PC-9 (cell line): ENCODE measurements at regions of chr1 and their contacts with region 1.

Region 1: DNA sequence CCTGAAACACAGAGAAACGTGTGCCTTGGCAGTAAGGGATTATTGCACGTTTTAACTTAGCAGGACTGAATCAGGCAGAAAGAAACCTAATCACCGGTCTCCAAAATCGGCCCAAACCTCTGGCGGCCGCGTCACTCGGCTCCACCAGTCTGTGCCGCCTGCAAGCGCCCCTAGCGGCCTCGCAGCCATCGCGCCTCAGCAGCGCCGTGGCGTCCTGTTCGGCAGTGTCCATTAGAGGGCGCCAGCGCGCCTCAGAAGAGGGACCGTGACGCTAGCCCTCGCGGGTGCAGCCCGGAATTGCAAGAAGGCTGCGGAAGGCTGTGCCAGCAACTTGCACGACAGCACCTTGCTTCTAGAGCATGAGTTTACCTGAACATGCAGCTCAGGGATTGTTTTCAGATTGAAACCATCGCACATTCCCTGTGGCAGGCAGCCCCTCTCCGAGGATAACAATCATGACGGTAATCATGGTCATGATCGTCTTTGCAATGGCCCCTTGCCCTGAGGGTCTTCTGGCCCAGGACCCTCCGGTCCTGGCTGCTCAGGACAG is 164.4 kb downstream of the TRIM33 start:
- DNase-seq: peak; percentile 84 to 97
- H3K4me3 ChIP-seq: peak overlapping the region; percentile 57
- H3K27ac ChIP-seq: no peak overlapping the region
- H3K4me1 ChIP-seq: no peaks in the 10 kb centered on the region
- H3K27me3 ChIP-seq: no peaks in the 10 kb centered on the region
- CTCF ChIP-seq: peak; percentile 100

Region 2: GRCh38 chr1:113978863-113979702 is 367.5 kb before region 1 on chr1 and contains the start of gene OLFML3:
- CTCF ChIA-PET with region 1: interaction called, 3 read pairs
- POLR2A ChIA-PET with region 1: no interaction called
- intact Hi-C with region 1: loop called (anchors 2 kb)
- DNase-seq: peak; percentile 67 to 85
- H3K4me3 ChIP-seq: peak within 1 kb of the TSS; percentile 45; the same call in 1 of the 2 replicates
- H3K27ac ChIP-seq: peak within 1 kb of the TSS; percentile 79
- H3K4me1 ChIP-seq: peaks cover 16% of the 10 kb centered on the region
- H3K27me3 ChIP-seq: no peaks in the 10 kb centered on the region
- CTCF ChIP-seq: peak; percentile 94
- total RNA-seq, gene OLFML3: 0.45 and 0.52 TPM in 2 replicates

Region 3: GRCh38 chr1:114379987-114380386 is 33.4 kb after region 1 on chr1:
- CTCF ChIA-PET with region 1: no interaction called
- POLR2A ChIA-PET with region 1: no interaction called
- intact Hi-C with region 1: no loop called
- DNase-seq: no peak
- H3K4me3 ChIP-seq: no peak overlapping the region
- H3K27ac ChIP-seq: no peak overlapping the region
- H3K4me1 ChIP-seq: no peaks in the 10 kb centered on the region
- H3K27me3 ChIP-seq: no peaks in the 10 kb centered on the region
- CTCF ChIP-seq: no peak

Region 4: DNA sequence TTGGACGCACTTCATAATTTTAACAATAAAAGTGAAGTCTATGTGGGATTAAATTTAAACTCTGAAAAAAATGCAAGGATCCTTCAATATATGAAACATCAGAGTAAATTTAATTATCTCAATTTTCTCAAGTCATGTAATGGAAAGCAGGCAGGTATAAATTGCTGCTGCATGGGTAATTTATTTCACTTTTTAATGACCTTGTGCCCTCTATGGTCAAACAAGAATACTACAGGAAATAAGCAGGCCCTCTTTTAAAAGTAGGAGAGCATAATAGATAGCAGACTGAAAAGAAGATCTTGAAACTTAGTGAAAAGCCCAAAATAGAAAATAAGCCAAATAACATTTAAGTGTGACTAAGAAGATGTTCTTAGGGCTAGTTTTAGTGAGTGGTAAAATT is 212.0 kb after region 1 on chr1:
- CTCF ChIA-PET with region 1: no interaction called
- POLR2A ChIA-PET with region 1: no interaction called
- intact Hi-C with region 1: loop called (anchors 1 kb)
- DNase-seq: no peak
- H3K4me3 ChIP-seq: no peak overlapping the region
- H3K27ac ChIP-seq: no peak overlapping the region
- H3K4me1 ChIP-seq: no peaks in the 10 kb centered on the region
- H3K27me3 ChIP-seq: no peaks in the 10 kb centered on the region
- CTCF ChIP-seq: peak; percentile 69

Region 5: DNA sequence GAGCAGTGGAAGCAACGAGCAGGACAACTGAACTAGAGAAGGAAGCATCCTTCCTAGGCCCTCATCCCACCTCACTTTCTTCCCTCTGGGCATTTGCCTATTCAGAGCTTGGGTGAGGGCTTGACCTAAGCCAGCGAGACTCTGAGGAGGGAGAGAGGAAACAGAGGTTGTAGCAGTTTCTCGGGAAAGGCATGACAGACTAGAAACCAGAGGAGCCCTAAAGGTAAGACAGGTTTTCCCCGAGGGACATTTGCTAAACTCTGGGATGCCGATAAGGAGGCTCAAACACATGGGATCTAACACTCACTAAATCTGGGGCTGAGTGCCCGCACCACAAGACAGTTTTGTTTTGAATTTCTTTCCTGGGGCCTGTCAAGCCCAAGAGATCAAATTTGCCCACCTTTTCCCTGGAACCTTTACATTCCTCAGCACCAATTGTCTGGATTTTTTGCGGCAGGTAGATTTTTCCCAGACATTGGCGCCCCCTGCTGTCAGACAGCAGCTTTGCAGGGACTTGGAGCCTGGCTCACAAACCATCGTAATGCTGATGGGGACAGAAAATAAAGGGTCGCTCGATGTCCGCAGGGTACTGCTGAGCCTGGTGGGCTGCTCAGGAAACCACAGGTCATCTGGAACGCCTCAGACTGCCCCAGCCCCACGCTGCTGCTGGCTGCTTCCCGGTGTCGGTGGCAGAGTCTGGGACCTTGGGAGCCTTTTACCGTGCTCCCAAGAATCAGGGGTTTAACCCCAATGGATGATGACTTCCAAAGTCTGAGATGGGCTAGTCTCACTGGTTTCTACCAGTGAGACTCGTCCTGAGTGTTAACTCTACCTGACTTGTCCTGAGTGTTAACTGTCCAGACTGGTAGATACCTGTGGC is 766.2 kb after region 1 on chr1:
- CTCF ChIA-PET with region 1: no interaction called
- POLR2A ChIA-PET with region 1: no interaction called
- intact Hi-C with region 1: loop called (anchors 5 kb)
- DNase-seq: peak in 1 of 2 experiments; percentile 56
- H3K4me3 ChIP-seq: no peak overlapping the region
- H3K27ac ChIP-seq: no peak overlapping the region
- H3K4me1 ChIP-seq: peaks cover 63% of the 10 kb centered on the region
- H3K27me3 ChIP-seq: no peaks in the 10 kb centered on the region
- CTCF ChIP-seq: peak; percentile 99

Region 6: DNA sequence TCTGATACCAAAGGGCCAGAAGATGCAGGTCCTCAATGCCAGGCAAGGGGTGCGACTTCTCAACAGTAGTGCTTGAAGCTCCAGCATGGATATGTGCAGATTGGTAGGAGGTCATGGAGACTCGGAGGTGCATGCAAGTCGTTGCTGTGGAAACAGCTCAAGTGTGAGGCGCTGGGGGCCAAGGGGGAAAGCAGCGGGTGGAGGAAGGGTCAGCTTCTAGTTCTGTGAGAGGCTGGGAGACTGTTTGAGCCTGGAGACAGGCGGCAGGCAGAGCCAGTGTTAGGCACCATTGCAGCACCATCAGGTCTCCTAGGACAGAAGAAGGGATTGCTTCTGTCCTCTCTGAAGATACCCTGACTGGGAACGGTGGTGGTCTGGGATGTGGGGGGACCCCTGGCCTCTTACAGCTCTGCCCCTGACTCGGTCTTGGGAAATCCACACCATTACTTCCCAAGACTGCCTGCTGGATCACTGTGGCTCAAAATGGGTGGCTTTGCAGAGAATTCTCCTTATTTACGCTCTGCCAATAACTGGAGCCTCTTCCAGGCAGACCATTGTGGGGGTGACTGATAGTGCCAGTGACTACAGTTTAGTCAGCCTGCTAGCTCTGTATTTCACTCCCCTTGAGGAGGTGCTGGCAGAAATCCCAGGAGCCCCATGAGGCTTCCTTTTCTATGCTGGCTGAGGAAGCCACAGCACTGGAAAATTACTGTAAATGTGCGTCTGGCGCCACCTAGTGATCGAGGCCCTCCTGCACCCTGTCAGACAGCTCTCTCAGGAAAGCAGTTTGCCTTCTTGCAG is 1248.9 kb after region 1 on chr1:
- CTCF ChIA-PET with region 1: no interaction called
- POLR2A ChIA-PET with region 1: no interaction called
- intact Hi-C with region 1: loop called (anchors 10 kb)
- DNase-seq: peak; percentile 87 to 91
- H3K4me3 ChIP-seq: no peak overlapping the region
- H3K27ac ChIP-seq: no peak overlapping the region
- H3K4me1 ChIP-seq: peaks cover 25% of the 10 kb centered on the region
- H3K27me3 ChIP-seq: no peaks in the 10 kb centered on the region
- CTCF ChIP-seq: peak; percentile 99